Left lung (tissue), 14 donors: ENCODE measurements at regions of chr11 and their contacts with region 1.

Region 1: DNA sequence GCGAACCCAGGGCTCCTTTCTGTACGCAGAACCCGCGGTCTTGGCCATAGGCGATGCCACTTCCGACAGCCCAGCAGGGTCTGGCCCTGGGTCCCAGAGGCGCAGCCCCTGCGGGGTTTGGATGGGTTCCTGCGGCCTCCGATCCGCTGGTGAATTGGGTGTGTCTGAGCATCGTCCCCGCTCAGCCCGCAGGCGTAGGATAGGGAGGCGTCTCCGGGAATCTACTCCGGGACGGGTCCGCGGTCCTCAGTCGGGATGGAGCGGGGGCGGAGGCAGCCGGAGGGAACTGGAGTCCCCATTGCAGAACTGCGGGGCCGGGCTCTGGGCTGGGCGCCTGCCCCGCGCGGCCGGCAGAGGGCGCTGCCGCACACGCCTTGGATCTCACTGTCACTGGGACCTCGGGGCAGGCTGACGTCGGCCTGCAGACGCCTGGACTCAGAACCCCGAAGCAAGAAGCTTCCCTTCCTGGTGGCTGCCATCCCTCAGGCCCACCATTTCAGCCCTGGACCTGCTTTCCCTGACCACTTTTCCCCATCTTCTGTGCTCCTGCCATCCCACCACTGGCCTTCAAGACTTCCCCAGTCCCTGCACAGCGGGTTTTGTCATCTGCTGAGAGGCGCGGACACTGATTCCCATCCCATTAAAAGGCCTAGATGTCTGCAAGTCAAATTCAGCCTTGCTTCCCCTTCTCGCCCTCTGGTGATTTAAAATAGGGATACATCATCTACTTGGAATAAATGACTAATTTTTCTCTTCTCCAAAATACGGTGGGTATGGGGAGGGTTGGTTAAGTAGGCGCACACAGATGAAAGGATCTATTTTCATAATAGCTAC is 38.3 kb upstream of the CREB3L1 start:
- DNase-seq: peak; percentile 84 to 98 (median 90)
- ATAC-seq: peak; percentile 84
- H3K4me3 ChIP-seq: peak overlapping the region; percentile 21 to 58
- H3K27ac ChIP-seq: peak overlapping the region; percentile 89 to 91
- H3K4me1 ChIP-seq: peaks cover 25 to 59% of the 10 kb centered on the region in 2 donors
- H3K27me3 ChIP-seq: peaks cover 0 to 16% of the 10 kb centered on the region in 2 donors
- CTCF ChIP-seq: peak; percentile 99 to 100

Region 2: DNA sequence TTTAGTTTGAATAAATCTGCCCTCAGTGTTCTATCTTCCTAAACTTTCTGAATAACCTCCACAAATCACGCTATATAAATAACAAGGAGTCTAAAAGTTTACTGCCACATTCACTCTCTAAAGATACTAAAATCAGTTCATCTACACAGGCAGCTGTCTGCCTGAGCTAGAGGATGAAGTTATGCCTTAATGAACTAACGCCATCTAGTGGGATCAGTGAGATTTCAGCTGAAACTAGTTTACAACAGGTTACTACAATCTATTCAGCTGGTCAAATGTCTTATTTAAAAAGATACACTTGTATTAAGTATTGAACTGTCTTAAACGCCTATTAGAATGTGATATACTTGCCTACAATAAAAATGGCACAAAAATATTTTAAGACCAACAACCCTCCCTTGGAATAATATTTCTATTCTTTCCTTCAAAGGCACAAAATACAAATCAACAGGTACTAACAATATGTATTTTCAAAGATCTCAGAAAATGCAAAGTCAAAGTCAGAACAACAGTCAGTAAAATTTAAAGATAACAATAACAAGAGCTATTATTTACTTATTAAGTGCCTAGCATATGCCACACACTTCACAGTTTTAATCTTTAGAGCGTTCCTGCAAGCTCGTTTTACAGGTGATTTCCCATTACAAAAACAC is 232.6 kb before region 1 on chr11:
- intact Hi-C with region 1: no loop called
- DNase-seq: peak in 2 of 4 donors; percentile 57 to 75
- ATAC-seq: peak; percentile 93
- H3K4me3 ChIP-seq: no peak overlapping the region
- H3K27ac ChIP-seq: no peak overlapping the region
- H3K4me1 ChIP-seq: peaks cover 8 to 19% of the 10 kb centered on the region in 2 donors
- H3K27me3 ChIP-seq: no peaks in the 10 kb centered on the region
- CTCF ChIP-seq: peak; percentile 60 to 71

Region 3: DNA sequence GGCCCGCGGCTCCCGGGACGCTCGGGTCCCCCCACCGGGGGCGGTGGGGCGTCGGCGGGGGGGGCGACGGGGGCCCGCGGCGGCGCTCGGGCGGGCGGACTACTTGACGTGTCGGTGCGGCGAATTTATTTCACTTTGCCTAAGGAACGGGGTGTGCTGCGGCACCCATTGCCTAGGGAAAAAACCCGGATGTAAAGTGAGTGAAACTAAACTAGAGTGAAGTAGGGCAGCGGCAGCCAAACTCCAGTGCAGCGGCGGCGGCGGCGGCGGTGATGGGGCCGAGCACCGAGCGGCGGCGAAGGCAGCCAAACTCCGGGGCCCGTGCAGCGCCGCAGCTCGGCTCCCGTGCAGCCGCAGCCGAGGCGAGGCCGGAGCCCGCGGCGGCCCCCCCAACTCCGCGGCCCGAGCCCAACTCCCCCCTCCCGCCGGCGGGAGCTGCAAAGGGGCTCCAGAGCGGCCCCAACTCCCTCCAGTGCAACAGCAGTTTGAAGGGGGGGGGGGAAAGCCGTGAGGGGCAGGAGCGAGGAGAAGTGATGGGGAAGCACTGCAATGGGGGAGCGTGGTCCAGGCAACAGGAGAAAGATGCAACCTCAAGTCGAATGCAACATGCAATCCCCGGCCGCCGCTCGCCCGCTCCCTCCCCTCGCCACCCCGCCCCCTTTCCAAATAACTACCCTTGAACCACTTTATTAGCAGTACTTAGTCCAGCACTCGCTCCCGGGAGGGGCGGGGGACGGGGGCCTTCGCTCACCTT is 117.3 kb before region 1 on chr11:
- intact Hi-C with region 1: loop called in 1 of 2 experiments (anchors 10 kb)
- DNase-seq: peak; percentile 80 to 90 (median 88)
- ATAC-seq: peak; percentile 32
- H3K4me3 ChIP-seq: peak overlapping the region; percentile 55 to 73
- H3K27ac ChIP-seq: peak overlapping the region; percentile 96 to 97
- H3K4me1 ChIP-seq: peaks cover 22 to 38% of the 10 kb centered on the region in 2 donors
- H3K27me3 ChIP-seq: no peaks in the 10 kb centered on the region
- CTCF ChIP-seq: no peak

Region 4: GRCh38 chr11:46308631-46309419 is 69.6 kb after region 1 on chr11:
- intact Hi-C with region 1: loop called (anchors 5 to 10 kb)
- DNase-seq: peak in 3 of 4 donors; percentile 67 to 90 (median 77)
- ATAC-seq: peak; percentile 86
- H3K4me3 ChIP-seq: no peak overlapping the region
- H3K27ac ChIP-seq: no peak overlapping the region
- H3K4me1 ChIP-seq: peaks cover 0 to 6% of the 10 kb centered on the region in 2 donors
- H3K27me3 ChIP-seq: no peaks in the 10 kb centered on the region
- CTCF ChIP-seq: peak; percentile 80 to 81